ENCODE measurements at regions of chr2 and their contacts with region 1.

Region 1: GRCh38 chr2:157492189-157492773 is 48.4 kb upstream of the CYTIP start:
- DNase-seq: peak; percentile 63
- H3K4me3 ChIP-seq: no peak overlapping the region
- H3K27ac ChIP-seq: no peak overlapping the region
- H3K4me1 ChIP-seq: peaks cover 5% of the 10 kb centered on the region
- H3K27me3 ChIP-seq: peaks cover 2 to 5% of the 10 kb centered on the region in 2 experiments
- CTCF ChIP-seq: peak; percentile 69 to 71
- POLR2A ChIP-seq: no peak

Region 2: GRCh38 chr2:157596992-157597681 is 104.9 kb after region 1 on chr2:
- CTCF ChIA-PET with region 1: interaction called, 5 read pairs
- POLR2A ChIA-PET with region 1: no interaction called
- dilution Hi-C with region 1: no loop called
- intact Hi-C with region 1: loop called (anchors 2 kb)
- DNase-seq: peak; percentile 4
- H3K4me3 ChIP-seq: no peak overlapping the region
- H3K27ac ChIP-seq: no peak overlapping the region
- H3K4me1 ChIP-seq: no peaks in the 10 kb centered on the region
- H3K27me3 ChIP-seq: peaks cover 10 to 20% of the 10 kb centered on the region in 2 experiments
- CTCF ChIP-seq: peak; percentile 18 to 56
- POLR2A ChIP-seq: no peak

Region 3: GRCh38 chr2:157628477-157629415 is 136.5 kb after region 1 on chr2 and contains the start of gene ACVR1C:
- CTCF ChIA-PET with region 1: interaction called, 10 read pairs
- POLR2A ChIA-PET with region 1: no interaction called
- dilution Hi-C with region 1: no loop called
- intact Hi-C with region 1: no loop called
- DNase-seq: peak; percentile 58
- H3K4me3 ChIP-seq: peak within 1 kb of the TSS; percentile 1 to 36 (median 20)
- H3K27ac ChIP-seq: no peak within 1 kb of the TSS
- H3K4me1 ChIP-seq: peaks cover 8% of the 10 kb centered on the region
- H3K27me3 ChIP-seq: peaks cover 20 to 30% of the 10 kb centered on the region in 2 experiments
- CTCF ChIP-seq: peak; percentile 59 to 68
- POLR2A ChIP-seq: no peak
- total RNA-seq, gene ACVR1C: not detected in 2 replicates

Region 4: DNA sequence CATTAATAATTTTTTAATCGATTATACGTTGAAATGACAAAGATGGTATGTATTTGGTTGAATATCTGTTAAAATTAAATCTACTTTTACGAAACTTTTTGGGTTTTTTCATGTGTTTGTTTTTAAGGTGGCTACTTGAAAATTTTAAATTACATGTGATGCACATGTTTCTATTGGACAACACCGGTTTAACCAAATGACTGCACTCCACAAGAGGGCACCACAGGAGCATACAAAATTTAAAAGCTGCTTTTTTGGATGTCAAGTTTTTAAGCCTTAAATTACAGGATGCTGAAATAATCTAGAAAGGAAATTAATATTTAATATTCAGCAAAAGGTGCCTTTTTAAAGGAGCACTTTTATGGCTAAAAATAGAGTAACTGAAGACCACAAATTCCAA is 285.1 kb after region 1 on chr2:
- CTCF ChIA-PET with region 1: interaction called, 3 read pairs
- POLR2A ChIA-PET with region 1: no interaction called
- dilution Hi-C with region 1: no loop called
- intact Hi-C with region 1: loop called (anchors 1 kb)
- DNase-seq: peak; percentile 74
- H3K4me3 ChIP-seq: no peak overlapping the region
- H3K27ac ChIP-seq: no peak overlapping the region
- H3K4me1 ChIP-seq: no peaks in the 10 kb centered on the region
- H3K27me3 ChIP-seq: no peaks in the 10 kb centered on the region
- CTCF ChIP-seq: peak; percentile 39 to 50
- POLR2A ChIP-seq: no peak